Activated naive CD8-positive, alpha-beta T cell treated with anti-CD3 and anti-CD28 coated beads, Interleukin-2, amount 10 ng/mL, durations not matched to agents 7 days and 5 days (primary cell): ENCODE measurements at regions of chr4 and their contacts with region 1.

Region 1: DNA sequence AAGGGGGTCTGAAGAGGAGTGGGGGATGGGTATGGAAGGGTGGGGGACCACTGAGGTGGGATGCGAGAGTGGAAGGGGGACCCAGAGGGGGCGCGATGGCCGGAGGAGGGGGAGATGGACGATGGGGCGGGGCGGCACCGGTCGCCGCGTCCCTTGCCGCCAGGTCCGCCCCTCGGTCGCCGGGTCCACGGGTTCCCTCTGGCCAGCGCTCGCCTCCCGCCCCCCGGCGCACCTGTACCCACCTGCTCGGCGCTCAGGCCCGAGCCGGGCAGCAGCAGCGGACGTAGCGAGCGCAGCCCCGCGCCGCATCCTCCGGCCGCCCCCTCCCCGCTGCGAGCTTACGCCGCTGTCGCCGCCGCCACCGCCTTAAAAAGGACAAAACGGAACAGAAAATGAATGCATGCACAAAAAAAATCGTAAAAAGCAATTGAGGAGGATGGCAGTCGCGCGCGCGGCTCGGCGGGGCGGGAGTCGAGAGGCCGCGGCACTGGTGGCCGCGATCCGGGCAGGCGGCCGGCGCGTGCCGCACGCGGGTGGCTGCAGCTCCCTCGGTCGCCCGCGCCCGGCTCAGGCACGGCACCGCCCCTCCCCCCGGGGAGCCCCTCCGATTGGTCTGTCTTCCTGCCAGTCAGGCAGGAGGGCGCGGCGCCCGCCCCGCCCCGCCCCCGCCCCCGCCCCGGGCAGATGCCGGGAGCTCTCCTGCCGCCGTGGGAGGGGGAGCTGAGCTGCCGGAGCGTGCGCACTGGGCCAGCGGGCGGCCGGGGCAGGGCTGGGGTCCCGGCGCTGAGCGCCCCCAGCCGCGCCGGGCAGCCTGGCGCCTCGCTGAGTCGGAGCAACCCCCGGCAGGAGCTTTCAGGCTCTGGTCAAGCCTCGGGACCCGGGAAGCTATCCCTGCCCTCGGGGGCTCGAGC is at the start of gene JAKMIP1:
- DNase-seq: peak; percentile 86
- ATAC-seq: peak; percentile 67
- H3K4me3 Mint-ChIP-seq: peak within 1 kb of the TSS; percentile 78
- H3K27ac Mint-ChIP-seq: peak within 1 kb of the TSS; percentile 80
- H3K4me1 Mint-ChIP-seq: peaks cover 22% of the 10 kb centered on the region
- H3K27me3 Mint-ChIP-seq: peaks cover 44% of the 10 kb centered on the region
- total RNA-seq, gene JAKMIP1: 5.3 to 5.9 TPM

Region 2: DNA sequence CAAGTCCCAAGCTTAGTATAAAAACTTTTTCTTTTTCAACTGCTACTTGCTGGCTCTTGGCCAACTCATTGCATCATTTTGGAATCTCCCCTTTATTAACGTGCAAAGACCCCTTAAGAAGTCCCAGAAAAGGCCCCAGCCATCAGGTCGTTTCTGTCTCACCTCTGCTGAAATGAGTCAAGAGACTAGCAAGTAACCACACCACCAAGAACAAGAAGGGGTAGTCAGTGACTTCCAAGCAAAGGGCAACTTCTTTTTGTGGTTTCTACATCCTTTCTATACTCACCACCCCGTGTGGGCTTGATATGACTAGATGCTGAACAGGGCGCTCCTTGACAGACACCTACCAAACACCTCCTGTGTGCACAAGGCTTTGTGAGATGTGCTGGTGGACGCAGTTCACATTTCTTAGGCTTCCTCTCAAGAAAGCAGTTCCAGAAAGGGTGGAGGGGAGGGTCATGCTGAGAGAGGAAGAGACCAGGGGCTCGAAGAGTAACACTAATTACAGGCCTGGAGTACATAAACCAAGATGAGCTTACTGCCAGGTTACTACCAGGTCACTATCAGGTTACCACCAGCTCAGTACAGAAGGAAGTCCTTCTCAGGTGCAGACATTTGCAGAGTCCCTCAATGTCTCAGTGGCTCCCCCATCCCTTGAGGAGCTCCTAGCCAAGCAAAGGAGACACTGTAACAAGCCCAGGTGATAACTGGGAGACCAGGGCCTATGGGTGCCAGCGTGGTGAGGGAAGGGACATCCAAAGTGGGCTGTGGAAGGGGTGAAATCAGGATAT is 19.2 kb before region 1 on chr4:
- POLR2A ChIA-PET with region 1: interaction called, 13 read pairs
- DNase-seq: peak; percentile 43
- ATAC-seq: peak; percentile 88
- H3K4me3 Mint-ChIP-seq: peak overlapping the region; percentile 63
- H3K27ac Mint-ChIP-seq: peak overlapping the region; percentile 94
- H3K4me1 Mint-ChIP-seq: peaks cover 55% of the 10 kb centered on the region
- H3K27me3 Mint-ChIP-seq: peaks cover 2% of the 10 kb centered on the region

Region 3: DNA sequence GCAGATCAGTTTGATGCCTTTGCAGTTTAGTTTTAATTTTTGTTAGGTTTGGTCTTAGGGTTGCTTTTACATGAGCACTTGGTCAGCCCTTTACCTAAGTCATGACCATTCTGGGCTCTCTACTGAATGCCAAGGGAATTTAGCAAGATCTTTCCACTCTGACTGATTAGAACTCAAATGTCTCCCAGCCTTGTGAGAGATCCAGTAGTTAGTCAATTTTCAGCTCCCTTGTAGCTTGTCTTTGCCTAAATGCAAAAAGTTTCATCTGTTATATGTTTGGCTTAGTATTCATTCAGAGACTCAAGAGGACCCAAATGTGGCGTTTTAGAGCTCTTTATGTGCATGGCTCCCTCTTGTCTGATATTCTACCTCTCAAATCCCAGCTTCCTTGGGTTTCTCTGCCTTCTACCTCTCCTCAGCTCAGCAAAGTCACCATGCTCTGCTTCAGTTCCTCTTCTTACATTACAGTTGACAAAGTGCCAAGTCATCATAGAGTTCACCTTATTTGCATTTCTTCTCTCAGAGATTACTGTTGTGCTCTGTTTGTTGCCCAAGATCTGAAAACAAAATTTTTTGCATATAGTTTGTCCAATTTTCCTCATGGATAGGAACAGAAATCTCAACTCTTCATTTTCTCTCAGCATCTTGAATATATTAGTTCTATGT is 17.6 kb after region 1 on chr4:
- POLR2A ChIA-PET with region 1: no interaction called
- DNase-seq: no peak
- ATAC-seq: no peak
- H3K4me3 Mint-ChIP-seq: no peak overlapping the region
- H3K27ac Mint-ChIP-seq: no peak overlapping the region
- H3K4me1 Mint-ChIP-seq: no peaks in the 10 kb centered on the region
- H3K27me3 Mint-ChIP-seq: peaks cover 53% of the 10 kb centered on the region